ENCODE measurements at regions of chr15 and their contacts with region 1.

Region 1: GRCh38 chr15:52010633-52011595 is 8.1 kb upstream of the MAPK6 start:
- DNase-seq: peak in 1 of 3 donors; percentile 28
- H3K4me3 ChIP-seq: no peak overlapping the region
- H3K4me3 Mint-ChIP-seq: no peak overlapping the region
- H3K27ac ChIP-seq: no peak overlapping the region
- H3K27ac Mint-ChIP-seq: no peak overlapping the region
- H3K4me1 ChIP-seq: peaks cover 47 to 62% of the 10 kb centered on the region in 2 donors
- H3K4me1 Mint-ChIP-seq: peaks cover 46% of the 10 kb centered on the region
- H3K27me3 ChIP-seq: no peaks in the 10 kb centered on the region
- H3K27me3 Mint-ChIP-seq: peaks cover 0 to 4% (median 0%) of the 10 kb centered on the region in 3 donors
- CTCF ChIP-seq: no peak

Region 2: DNA sequence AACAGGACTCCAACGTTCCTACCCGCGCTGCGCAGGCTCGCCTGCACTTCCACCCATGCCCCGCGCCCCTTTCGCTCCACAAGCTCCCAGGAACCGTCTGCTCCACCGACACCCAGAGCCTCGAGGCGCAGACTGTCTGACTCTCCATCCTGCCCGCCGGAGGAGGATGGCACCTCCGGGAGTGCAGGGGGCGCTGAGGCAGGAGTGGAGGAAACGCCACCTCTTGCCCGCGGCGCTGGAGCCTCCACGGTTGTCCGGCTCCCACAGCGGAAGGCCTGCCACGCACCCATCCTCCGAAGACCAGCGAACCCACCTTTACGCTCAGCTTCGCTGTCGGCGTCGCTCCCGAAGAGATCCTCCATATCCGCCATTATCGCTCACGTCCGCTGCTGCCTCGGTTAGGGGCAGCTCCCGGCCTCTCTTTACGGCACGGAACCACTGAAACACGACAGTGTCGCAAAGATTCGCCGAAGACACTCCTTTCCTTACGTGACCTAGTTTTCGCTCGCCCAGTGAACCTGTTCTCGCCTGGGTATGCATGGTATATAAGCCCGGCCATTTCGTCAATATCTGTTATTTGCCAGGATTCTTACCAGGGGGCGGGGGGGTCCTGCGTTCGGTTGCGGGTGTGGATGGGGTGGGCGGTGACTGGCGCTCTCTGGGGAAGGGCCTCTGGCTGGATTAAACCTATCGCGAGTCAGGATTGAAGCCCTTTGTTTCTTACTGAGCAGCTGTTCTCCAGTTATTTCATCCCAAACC is 39.4 kb before region 1 on chr15 and contains the start of gene LEO1:
- intact Hi-C with region 1: loop called in 1 of 2 experiments (anchors 5 kb)
- DNase-seq: peak; percentile 93 to 95 (median 94)
- H3K4me3 ChIP-seq: peak within 1 kb of the TSS; percentile 60 to 96 (median 90)
- H3K4me3 Mint-ChIP-seq: peak within 1 kb of the TSS; percentile 94 to 99
- H3K27ac ChIP-seq: peak within 1 kb of the TSS; percentile 82 to 89
- H3K27ac Mint-ChIP-seq: peak within 1 kb of the TSS; percentile 92 to 98 (median 94)
- H3K4me1 ChIP-seq: peaks cover 10 to 12% of the 10 kb centered on the region in 2 donors
- H3K4me1 Mint-ChIP-seq: peaks cover 18% of the 10 kb centered on the region
- H3K27me3 ChIP-seq: no peaks in the 10 kb centered on the region
- H3K27me3 Mint-ChIP-seq: no peaks in the 10 kb centered on the region
- CTCF ChIP-seq: peak; percentile 28
- polyA plus RNA-seq, gene LEO1: 1.4 to 9.3 (median 4.7) TPM